ENCODE measurements at regions of chr6 and their contacts with region 1.

Region 1: GRCh38 chr6:56887086-56887485 is 67.8 kb upstream of the BEND6 start:
- DNase-seq: no peak
- ATAC-seq: no peak
- H3K4me3 ChIP-seq: no peak overlapping the region
- H3K4me3 Mint-ChIP-seq: no peak overlapping the region
- H3K27ac ChIP-seq: no peak overlapping the region
- H3K27ac Mint-ChIP-seq: no peak overlapping the region
- H3K4me1 ChIP-seq: peaks cover 0 to 27% of the 10 kb centered on the region in 2 experiments
- H3K4me1 Mint-ChIP-seq: peaks cover 21 to 27% (median 21%) of the 10 kb centered on the region in 3 donors
- H3K27me3 ChIP-seq: no peaks in the 10 kb centered on the region
- H3K27me3 Mint-ChIP-seq: peaks cover 0 to 3% of the 10 kb centered on the region in 2 donors

Region 2: GRCh38 chr6:56833127-56833791 is 53.8 kb before region 1 on chr6:
- CTCF ChIA-PET with region 1: no interaction called
- POLR2A ChIA-PET with region 1: interaction called in 1 of 2 experiments, 10 read pairs
- DNase-seq: no peak
- ATAC-seq: no peak
- H3K4me3 ChIP-seq: no peak overlapping the region
- H3K4me3 Mint-ChIP-seq: no peak overlapping the region
- H3K27ac ChIP-seq: no peak overlapping the region
- H3K27ac Mint-ChIP-seq: no peak overlapping the region
- H3K4me1 ChIP-seq: no peaks in the 10 kb centered on the region
- H3K4me1 Mint-ChIP-seq: no peaks in the 10 kb centered on the region
- H3K27me3 ChIP-seq: no peaks in the 10 kb centered on the region
- H3K27me3 Mint-ChIP-seq: peaks cover 16 to 31% of the 10 kb centered on the region in 2 donors